ENCODE measurements at regions of chr12 and their contacts with region 1.

Region 1: GRCh38 chr12:132908145-132909044 is 21.0 kb upstream of the CHFR start:
- DNase-seq: peak; percentile 88 to 98 (median 96)
- ATAC-seq: peak; percentile 92
- H3K4me3 ChIP-seq: peak overlapping the region; percentile 58 to 77
- H3K4me3 Mint-ChIP-seq: peak overlapping the region; percentile 96
- H3K27ac ChIP-seq: peak overlapping the region; percentile 86 to 93
- H3K27ac Mint-ChIP-seq: peak overlapping the region; percentile 97
- H3K4me1 ChIP-seq: peaks cover 6% of the 10 kb centered on the region
- H3K4me1 Mint-ChIP-seq: peaks cover 23% of the 10 kb centered on the region
- H3K27me3 ChIP-seq: peaks cover 0 to 2% of the 10 kb centered on the region in 2 experiments
- H3K27me3 Mint-ChIP-seq: no peaks in the 10 kb centered on the region
- CTCF ChIP-seq: no peak

Region 2: GRCh38 chr12:132470978-132471857 is 437.2 kb before region 1 on chr12:
- CTCF ChIA-PET with region 1: no interaction called
- POLR2A ChIA-PET with region 1: no interaction called
- intact Hi-C with region 1: no loop called
- DNase-seq: peak in 1 of 9 experiments; percentile 57
- ATAC-seq: peak; percentile 41
- H3K4me3 ChIP-seq: no peak overlapping the region
- H3K4me3 Mint-ChIP-seq: peak overlapping the region; percentile 19
- H3K27ac ChIP-seq: no peak overlapping the region
- H3K27ac Mint-ChIP-seq: peak overlapping the region; percentile 60
- H3K4me1 ChIP-seq: peaks cover 29% of the 10 kb centered on the region
- H3K4me1 Mint-ChIP-seq: peaks cover 40% of the 10 kb centered on the region
- H3K27me3 ChIP-seq: peaks cover 0 to 9% of the 10 kb centered on the region in 2 experiments
- H3K27me3 Mint-ChIP-seq: no peaks in the 10 kb centered on the region
- CTCF ChIP-seq: no peak

Region 3: DNA sequence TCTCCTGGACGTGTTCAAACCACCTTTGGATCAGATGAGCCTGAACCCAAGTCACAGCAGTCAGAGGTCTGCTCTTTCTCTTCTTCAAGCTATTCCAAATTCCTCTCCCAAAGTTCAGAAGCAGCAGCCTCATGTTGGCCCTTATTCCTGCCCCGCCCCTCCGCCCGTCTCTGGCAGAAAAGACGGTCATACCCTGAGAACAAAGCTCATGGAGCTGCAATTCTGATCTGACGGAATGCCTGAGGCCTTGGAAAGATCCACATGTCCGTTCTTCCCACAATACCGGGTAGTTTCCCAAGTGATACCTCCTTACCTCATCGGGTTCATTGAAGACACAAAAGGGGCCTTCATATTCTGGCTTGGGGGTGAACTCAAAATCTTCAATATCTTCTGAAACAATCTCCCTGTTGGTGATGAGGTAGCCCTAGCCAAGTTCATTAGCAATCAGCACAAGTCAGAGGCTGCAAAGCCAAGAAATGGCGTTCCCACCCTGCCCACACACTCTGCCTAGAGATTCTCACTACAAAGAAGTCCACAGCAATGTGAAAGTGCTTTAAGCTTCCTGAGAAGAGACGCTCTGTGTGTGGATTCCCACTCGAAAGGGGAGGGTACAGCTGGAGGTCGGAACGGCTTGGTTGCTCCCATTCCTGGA is 232.5 kb before region 1 on chr12:
- CTCF ChIA-PET with region 1: no interaction called
- POLR2A ChIA-PET with region 1: no interaction called
- intact Hi-C with region 1: no loop called
- DNase-seq: no peak
- ATAC-seq: no peak
- H3K4me3 ChIP-seq: no peak overlapping the region
- H3K4me3 Mint-ChIP-seq: no peak overlapping the region
- H3K27ac ChIP-seq: no peak overlapping the region
- H3K27ac Mint-ChIP-seq: no peak overlapping the region
- H3K4me1 ChIP-seq: no peaks in the 10 kb centered on the region
- H3K4me1 Mint-ChIP-seq: no peaks in the 10 kb centered on the region
- H3K27me3 ChIP-seq: no peaks in the 10 kb centered on the region
- H3K27me3 Mint-ChIP-seq: no peaks in the 10 kb centered on the region
- CTCF ChIP-seq: no peak

Region 4: DNA sequence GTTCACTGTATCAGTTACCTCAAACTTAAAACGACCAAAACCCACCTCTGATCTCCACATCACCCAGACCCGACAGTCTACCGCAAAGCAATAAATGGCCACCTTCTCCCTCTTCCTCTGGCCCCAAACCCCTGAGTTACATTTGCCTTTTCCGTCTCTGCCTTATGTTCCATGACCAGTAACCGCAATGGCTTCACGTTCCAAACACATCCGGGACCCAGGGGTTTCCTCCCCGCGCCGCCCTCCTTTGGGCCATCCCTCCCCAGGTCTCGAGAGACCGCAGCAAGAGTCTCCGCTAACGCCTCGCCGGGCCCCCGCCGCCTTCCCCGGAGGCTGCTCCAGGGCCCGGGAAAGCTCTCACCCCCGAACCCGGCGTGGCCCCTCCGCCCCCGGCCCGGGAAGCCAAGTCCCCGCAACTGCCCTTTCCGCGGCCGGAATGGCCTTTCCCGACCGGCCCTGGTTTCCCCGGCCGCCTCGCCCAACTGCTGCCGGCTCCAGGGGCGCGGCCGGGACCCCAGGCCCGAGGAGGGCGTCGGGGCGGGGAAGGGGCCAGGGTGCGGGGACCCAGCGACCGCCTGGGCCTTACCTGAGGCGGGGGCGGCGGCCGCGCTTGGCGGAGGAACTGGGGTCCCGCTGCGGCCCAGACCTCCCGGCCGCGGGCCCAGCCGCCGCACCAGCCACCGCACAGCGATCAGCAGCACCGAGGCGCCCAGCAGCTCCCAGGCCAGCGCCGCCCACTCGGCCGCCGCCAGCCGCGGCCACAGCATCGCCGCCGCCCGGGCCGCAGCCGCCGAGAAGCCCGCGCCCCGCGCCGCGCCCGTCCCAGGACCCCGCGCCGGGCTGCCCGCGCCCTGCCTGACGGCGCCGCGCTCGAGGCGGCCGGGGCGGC is 147.1 kb before region 1 on chr12 and contains the start of gene ANKLE2:
- CTCF ChIA-PET with region 1: interaction called, 7 read pairs
- POLR2A ChIA-PET with region 1: interaction called, 4 read pairs
- intact Hi-C with region 1: loop called in 1 of 2 experiments (anchors 1 kb)
- DNase-seq: peak in 8 of 9 experiments; percentile 45 to 78 (median 66)
- ATAC-seq: peak; percentile 57
- H3K4me3 ChIP-seq: peak within 1 kb of the TSS; percentile 66 to 82
- H3K4me3 Mint-ChIP-seq: peak within 1 kb of the TSS; percentile 94
- H3K27ac ChIP-seq: peak within 1 kb of the TSS; percentile 71 to 75
- H3K27ac Mint-ChIP-seq: peak within 1 kb of the TSS; percentile 98
- H3K4me1 ChIP-seq: peaks cover 18% of the 10 kb centered on the region
- H3K4me1 Mint-ChIP-seq: peaks cover 35% of the 10 kb centered on the region
- H3K27me3 ChIP-seq: no peaks in the 10 kb centered on the region
- H3K27me3 Mint-ChIP-seq: no peaks in the 10 kb centered on the region
- CTCF ChIP-seq: no peak
- total RNA-seq, gene ANKLE2: 54.7 to 57.9 TPM

Region 5: GRCh38 chr12:132828706-132829534 is 79.5 kb before region 1 on chr12 and contains the start of gene GOLGA3:
- CTCF ChIA-PET with region 1: interaction called, 10 read pairs
- POLR2A ChIA-PET with region 1: interaction called, 17 read pairs
- intact Hi-C with region 1: loop called (anchors 1 kb)
- DNase-seq: peak; percentile 87 to 98 (median 96)
- ATAC-seq: peak; percentile 91
- H3K4me3 ChIP-seq: peak within 1 kb of the TSS; percentile 92
- H3K4me3 Mint-ChIP-seq: peak within 1 kb of the TSS; percentile 96
- H3K27ac ChIP-seq: peak within 1 kb of the TSS; percentile 100
- H3K27ac Mint-ChIP-seq: peak within 1 kb of the TSS; percentile 100
- H3K4me1 ChIP-seq: peaks cover 29% of the 10 kb centered on the region
- H3K4me1 Mint-ChIP-seq: peaks cover 56% of the 10 kb centered on the region
- H3K27me3 ChIP-seq: no peaks in the 10 kb centered on the region
- H3K27me3 Mint-ChIP-seq: no peaks in the 10 kb centered on the region
- CTCF ChIP-seq: no peak
- total RNA-seq, gene GOLGA3: 31.7 to 33.8 TPM

Region 6: DNA sequence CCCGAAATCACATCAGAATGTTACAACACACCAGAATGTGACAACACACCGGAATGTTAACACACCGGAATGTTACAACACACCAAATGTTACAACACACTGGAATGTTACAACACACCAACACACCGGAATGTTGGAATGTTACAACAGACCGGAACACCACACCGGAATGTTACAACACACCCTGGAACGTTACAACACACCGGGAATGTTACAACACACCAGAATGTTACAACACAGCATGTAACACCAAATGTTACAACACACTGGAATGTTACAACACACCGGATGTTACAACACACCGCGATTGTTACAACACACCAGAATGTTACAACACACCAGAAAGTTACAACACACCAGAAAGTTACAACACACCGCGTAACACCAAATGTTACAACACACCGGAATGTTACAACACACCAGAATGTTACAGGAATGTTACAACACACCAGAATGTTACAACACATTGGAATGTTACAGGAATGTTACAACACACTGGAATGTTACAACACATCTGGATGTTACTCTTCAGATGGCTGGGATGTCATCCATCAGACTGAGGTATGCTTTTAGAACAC is 42.1 kb before region 1 on chr12:
- CTCF ChIA-PET with region 1: interaction called, 4 read pairs
- POLR2A ChIA-PET with region 1: no interaction called
- intact Hi-C with region 1: loop called in 1 of 2 experiments (anchors 5 kb)
- DNase-seq: no peak
- ATAC-seq: no peak
- H3K4me3 ChIP-seq: no peak overlapping the region
- H3K4me3 Mint-ChIP-seq: no peak overlapping the region
- H3K27ac ChIP-seq: peak overlapping the region in 1 of 2 experiments; percentile 8
- H3K27ac Mint-ChIP-seq: peak overlapping the region; percentile 86
- H3K4me1 ChIP-seq: peaks cover 24% of the 10 kb centered on the region
- H3K4me1 Mint-ChIP-seq: peaks cover 26% of the 10 kb centered on the region
- H3K27me3 ChIP-seq: no peaks in the 10 kb centered on the region
- H3K27me3 Mint-ChIP-seq: no peaks in the 10 kb centered on the region
- CTCF ChIP-seq: no peak

Region 7: DNA sequence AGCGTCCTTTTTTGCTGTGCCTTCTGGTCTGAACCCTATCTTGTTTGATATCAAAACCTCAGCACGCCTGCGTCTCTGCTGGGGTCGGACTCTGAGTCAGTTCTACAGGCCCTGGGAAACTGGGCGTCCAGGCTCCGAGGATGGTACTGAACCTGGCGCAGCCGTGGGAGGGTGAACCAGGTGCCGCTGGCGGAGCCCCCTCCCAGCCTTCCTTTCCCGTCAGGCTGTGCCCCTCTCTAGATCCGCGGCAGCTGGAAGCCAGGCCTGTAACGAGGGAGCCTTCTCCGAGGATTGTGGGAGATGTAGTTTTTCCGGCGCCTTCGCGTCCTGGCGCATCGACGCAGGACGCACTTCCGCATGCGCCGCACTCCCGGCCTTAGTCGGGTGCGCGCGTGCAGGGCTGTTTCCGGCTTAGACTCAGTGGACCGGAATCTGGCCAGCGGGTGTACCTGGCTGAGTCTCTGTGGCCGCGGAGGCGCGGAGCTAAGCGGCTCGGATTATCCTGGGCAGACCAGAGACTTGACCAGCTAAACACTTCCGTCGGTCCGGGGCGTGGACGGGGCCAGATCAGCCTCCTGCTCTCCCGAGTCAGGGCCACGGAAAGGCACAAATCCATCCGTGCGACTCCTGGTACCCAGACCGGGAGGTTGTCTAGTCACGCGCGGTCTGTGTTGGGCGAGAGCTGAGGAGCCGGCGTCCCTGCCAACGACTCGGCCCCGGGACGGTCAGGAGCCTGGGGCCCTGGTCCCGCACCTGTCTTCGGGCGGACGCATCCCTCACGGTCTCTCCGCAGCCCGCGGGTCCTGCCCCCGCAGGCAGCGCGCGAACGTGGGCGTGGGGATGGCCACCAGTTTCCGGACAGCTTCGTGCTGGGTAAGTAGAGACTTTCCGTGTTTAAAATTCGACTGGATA is 77.9 kb after region 1 on chr12 and contains the start of gene ZNF26:
- CTCF ChIA-PET with region 1: interaction called, 3 read pairs
- POLR2A ChIA-PET with region 1: interaction called, 9 read pairs
- intact Hi-C with region 1: loop called (anchors 1 kb)
- DNase-seq: peak; percentile 70 to 96 (median 88)
- ATAC-seq: peak; percentile 96
- H3K4me3 ChIP-seq: peak within 1 kb of the TSS; percentile 90 to 98
- H3K4me3 Mint-ChIP-seq: peak within 1 kb of the TSS; percentile 93
- H3K27ac ChIP-seq: peak within 1 kb of the TSS; percentile 89 to 93
- H3K27ac Mint-ChIP-seq: peak within 1 kb of the TSS; percentile 94
- H3K4me1 ChIP-seq: peaks cover 18% of the 10 kb centered on the region
- H3K4me1 Mint-ChIP-seq: peaks cover 35% of the 10 kb centered on the region
- H3K27me3 ChIP-seq: no peaks in the 10 kb centered on the region
- H3K27me3 Mint-ChIP-seq: peaks cover 2% of the 10 kb centered on the region
- CTCF ChIP-seq: no peak
- total RNA-seq, gene ZNF26: 44.8 to 45.5 TPM

Region 8: GRCh38 chr12:133130038-133130807 is 221.8 kb after region 1 on chr12 and contains the starts of genes ZNF10 and ZNF891:
- CTCF ChIA-PET with region 1: no interaction called
- POLR2A ChIA-PET with region 1: no interaction called
- intact Hi-C with region 1: loop called in 1 of 2 experiments (anchors 2 kb)
- DNase-seq: peak; percentile 95 to 99 (median 97)
- ATAC-seq: peak; percentile 86
- H3K4me3 ChIP-seq: peak within 1 kb of the TSS; percentile 56 to 63
- H3K4me3 Mint-ChIP-seq: peak within 1 kb of the TSS; percentile 87
- H3K27ac ChIP-seq: peak within 1 kb of the TSS; percentile 90 to 94
- H3K27ac Mint-ChIP-seq: peak within 1 kb of the TSS; percentile 98
- H3K4me1 ChIP-seq: peaks cover 8% of the 10 kb centered on the region
- H3K4me1 Mint-ChIP-seq: peaks cover 27% of the 10 kb centered on the region
- H3K27me3 ChIP-seq: no peaks in the 10 kb centered on the region
- H3K27me3 Mint-ChIP-seq: no peaks in the 10 kb centered on the region
- CTCF ChIP-seq: no peak
- total RNA-seq, gene ZNF10: 63.5 to 65.5 TPM
- total RNA-seq, gene ZNF891: 4.5 to 5.2 TPM